A549 (cell line): ENCODE measurements at regions of chr1 and their contacts with region 1.

Region 1: GRCh38 chr1:234610348-234611152 is 572 bp upstream of the IRF2BP2 start:
- DNase-seq: peak; percentile 92 to 95
- ATAC-seq: peak; percentile 42 to 58
- H3K4me3 ChIP-seq: peak overlapping the region; percentile 64
- H3K27ac ChIP-seq: peak overlapping the region; percentile 96
- H3K4me1 ChIP-seq: peaks cover 38% of the 10 kb centered on the region
- CTCF ChIP-seq: no peak; the same call in 2 of the 3 replicates
- EP300 ChIP-seq: no peak; a peak in 1 of 5 replicates
- POLR2A ChIP-seq: peak; percentile 97
- RAD21 ChIP-seq: peak in 1 of 2 experiments; percentile 2; a peak in 1 of 5 replicates

Region 2: DNA sequence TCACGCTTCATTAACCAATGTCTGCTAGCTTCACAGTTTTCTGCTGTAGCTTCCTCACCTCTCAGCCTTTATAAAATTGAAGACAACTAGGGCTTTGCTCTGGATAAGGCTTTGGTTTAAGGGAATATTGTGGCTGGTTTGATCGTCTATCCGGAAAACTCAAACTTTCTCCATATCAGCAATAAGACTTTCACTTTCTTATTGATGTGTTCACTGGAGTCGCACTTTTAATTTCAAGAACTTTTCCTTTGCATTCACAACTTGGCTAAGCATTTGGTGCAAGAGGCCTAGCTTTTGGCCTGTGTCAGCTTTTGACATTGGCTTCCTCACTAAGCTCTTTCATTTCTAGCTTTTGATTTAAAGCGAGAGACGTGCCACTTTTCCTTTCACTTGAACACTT is 224.4 kb before region 1 on chr1:
- CTCF ChIA-PET with region 1: no interaction called
- POLR2A ChIA-PET with region 1: no interaction called
- DNase-seq: no peak
- ATAC-seq: no peak
- H3K4me3 ChIP-seq: no peak overlapping the region
- H3K27ac ChIP-seq: no peak overlapping the region
- H3K4me1 ChIP-seq: no peaks in the 10 kb centered on the region
- CTCF ChIP-seq: no peak
- EP300 ChIP-seq: no peak
- POLR2A ChIP-seq: no peak
- RAD21 ChIP-seq: no peak

Region 3: DNA sequence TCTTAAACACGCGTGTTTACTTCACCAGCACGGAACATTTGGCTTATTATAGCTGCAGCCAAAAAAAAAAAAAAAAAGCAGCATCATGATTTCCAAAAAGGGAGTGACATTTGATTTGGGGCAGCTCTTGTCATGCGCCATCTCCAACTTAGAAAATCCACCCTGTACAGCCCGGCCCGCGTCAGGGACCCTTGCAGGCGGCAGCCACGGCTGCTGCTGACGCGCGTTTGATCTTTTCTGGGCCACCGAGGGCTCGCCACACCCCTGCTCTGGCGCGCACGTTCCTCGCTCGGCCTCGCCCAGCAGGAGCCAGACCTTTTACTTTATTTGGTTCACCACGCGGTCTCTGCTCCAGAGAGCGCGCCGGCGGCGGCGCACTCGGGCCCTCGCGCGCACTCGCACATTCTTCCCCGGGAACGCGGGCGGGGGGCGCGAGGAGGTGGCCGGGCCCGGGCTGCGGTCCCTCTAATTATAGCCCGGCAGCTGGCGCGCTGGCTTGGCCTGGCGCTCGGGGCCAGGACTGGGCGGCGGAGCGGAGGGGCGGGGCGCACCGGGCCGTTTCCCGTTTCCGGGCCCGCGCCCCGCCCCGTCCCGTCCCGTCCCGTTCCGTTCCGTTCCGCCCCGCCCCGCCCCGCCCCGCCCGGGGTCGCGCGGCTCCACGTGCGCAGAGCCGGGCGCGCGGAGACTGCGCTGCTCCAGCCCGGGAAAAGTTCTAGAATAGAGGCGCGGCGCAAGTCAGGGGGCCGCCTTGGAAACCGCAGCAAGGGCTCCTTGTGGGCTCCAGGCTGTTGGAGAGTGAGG is 10.7 kb before region 1 on chr1:
- CTCF ChIA-PET with region 1: interaction called, 8 read pairs
- POLR2A ChIA-PET with region 1: interaction called, 50 read pairs
- DNase-seq: peak; percentile 65 to 87
- ATAC-seq: peak; percentile 77 to 88
- H3K4me3 ChIP-seq: peak overlapping the region; percentile 49
- H3K27ac ChIP-seq: peak overlapping the region; percentile 94 to 96
- H3K4me1 ChIP-seq: peaks cover 58% of the 10 kb centered on the region
- CTCF ChIP-seq: 0 out of 3 replicates have a peak, but pooled peaks have one; percentile 5
- EP300 ChIP-seq: no peak; a peak in 1 of 5 replicates
- POLR2A ChIP-seq: peak; percentile 34
- RAD21 ChIP-seq: peak in 1 of 2 experiments; percentile 53; a peak in 3 of 5 replicates

Region 4: DNA sequence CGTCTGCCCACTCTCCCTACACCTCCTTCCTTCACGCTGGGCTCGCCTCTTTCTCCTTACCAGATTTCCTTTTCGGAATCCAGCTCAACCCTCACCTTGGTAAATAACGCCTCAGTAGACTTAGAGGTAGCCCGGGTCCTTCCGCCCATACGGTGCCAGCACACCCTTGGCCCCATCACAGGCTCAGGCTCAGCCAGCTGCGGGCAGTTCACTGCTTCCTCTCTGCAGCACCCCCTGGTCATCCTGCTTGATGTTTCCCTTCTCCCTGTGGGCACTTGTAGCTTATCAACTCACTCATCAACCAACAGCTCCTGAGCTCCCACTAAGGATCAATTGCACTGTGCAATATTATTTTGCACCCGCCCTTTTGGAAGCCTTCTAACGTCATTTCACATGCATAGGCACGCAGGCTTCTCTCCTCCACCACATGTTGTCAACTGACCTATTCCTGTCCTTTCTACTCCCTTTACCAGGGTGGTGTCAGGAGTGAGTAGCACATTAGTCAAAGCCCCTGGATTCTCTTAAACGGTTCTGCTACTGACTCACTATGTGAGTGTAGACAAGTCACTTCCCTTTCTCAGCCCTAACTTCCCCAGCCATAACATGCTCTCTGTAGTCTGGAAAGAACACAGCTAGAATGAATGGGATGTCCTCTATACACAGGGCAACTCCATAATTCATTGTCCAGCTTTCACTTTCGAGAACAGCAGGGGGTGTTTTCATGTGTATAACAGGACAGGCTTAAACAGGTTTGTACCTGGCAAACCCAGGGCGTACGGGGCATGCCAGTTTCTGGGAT is 46.5 kb after region 1 on chr1:
- CTCF ChIA-PET with region 1: interaction called, 4 read pairs
- POLR2A ChIA-PET with region 1: interaction called, 35 read pairs
- DNase-seq: peak; percentile 83 to 85
- ATAC-seq: peak; percentile 80 to 86
- H3K4me3 ChIP-seq: no peak overlapping the region
- H3K27ac ChIP-seq: peak overlapping the region; percentile 81 to 88
- H3K4me1 ChIP-seq: peaks cover 50% of the 10 kb centered on the region
- CTCF ChIP-seq: no peak
- EP300 ChIP-seq: peak in 1 of 2 experiments; percentile 15; a peak in 1 of 5 replicates
- POLR2A ChIP-seq: no peak
- RAD21 ChIP-seq: peak; percentile 16 to 19; a peak in 2 of 5 replicates

Region 5: DNA sequence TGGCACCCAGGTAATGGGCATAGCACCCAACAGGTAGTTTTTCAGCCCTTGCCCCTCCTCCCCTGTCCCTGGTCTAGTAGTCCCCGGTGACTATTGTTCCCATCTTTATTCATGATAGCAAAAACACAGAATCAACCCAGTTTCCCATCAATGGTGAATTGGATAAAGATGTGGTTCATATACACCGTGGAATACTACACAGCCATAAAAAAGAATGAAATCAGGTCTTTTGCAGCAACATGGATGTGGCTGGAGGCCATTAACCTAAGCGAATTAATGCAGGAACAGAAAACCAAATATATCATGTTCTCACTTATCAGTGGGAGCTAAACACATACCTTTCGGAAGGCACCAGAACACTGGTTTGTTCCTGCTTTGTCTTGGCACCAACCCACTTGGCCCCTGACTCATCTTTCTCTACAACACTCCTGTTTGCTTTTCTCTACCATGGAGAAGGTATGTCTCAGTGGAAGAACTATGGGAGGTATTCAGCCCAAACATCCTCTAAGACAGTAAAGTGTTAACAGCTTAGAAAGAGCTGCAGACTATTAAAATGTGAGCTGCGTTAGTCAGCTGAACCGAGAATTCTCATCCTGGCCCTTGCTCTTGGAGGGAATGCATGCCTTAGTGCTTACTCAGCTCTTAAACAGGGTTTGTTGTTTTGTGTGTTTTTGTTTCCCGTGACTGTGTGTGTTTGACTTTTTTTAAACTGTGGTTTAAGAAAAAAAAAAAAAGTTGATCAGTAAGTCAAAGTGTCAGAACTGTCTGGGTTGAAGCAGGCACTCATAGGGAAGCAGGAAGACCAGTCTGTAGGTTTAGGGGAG is 315.1 kb after region 1 on chr1:
- CTCF ChIA-PET with region 1: interaction called, 3 read pairs
- POLR2A ChIA-PET with region 1: interaction called, 30 read pairs
- DNase-seq: peak; percentile 84 to 95
- ATAC-seq: peak; percentile 96 to 97
- H3K4me3 ChIP-seq: no peak overlapping the region
- H3K27ac ChIP-seq: peak overlapping the region; percentile 72 to 84
- H3K4me1 ChIP-seq: peaks cover 25% of the 10 kb centered on the region
- CTCF ChIP-seq: no peak
- EP300 ChIP-seq: peak; percentile 71 to 79; a peak in 3 of 5 replicates
- POLR2A ChIP-seq: no peak
- RAD21 ChIP-seq: peak; percentile 43 to 70; a peak in 4 of 5 replicates

Region 6: GRCh38 chr1:234978397-234979295 is 368.1 kb after region 1 on chr1:
- CTCF ChIA-PET with region 1: interaction called, 4 read pairs
- POLR2A ChIA-PET with region 1: interaction called, 33 read pairs
- DNase-seq: peak in 1 of 2 experiments; percentile 91
- ATAC-seq: peak; percentile 7 to 40
- H3K4me3 ChIP-seq: no peak overlapping the region
- H3K27ac ChIP-seq: peak overlapping the region; percentile 94 to 95
- H3K4me1 ChIP-seq: peaks cover 85% of the 10 kb centered on the region
- CTCF ChIP-seq: no peak
- EP300 ChIP-seq: peak; percentile 94 to 96
- POLR2A ChIP-seq: no peak
- RAD21 ChIP-seq: peak; percentile 15 to 67; a peak in 4 of 5 replicates

Region 7: GRCh38 chr1:235075188-235075926 is 464.8 kb after region 1 on chr1:
- CTCF ChIA-PET with region 1: interaction called, 4 read pairs
- POLR2A ChIA-PET with region 1: interaction called, 50 read pairs
- DNase-seq: peak; percentile 74 to 90
- ATAC-seq: peak; percentile 55 to 73
- H3K4me3 ChIP-seq: 0 out of 3 replicates have a peak overlapping the region, but pooled peaks have one; percentile 14
- H3K27ac ChIP-seq: peak overlapping the region; percentile 97 to 98
- H3K4me1 ChIP-seq: peaks cover 92% of the 10 kb centered on the region
- CTCF ChIP-seq: no peak
- EP300 ChIP-seq: peak; percentile 63 to 76; a peak in 4 of 5 replicates
- POLR2A ChIP-seq: no peak
- RAD21 ChIP-seq: peak; percentile 8 to 12; a peak in 1 of 5 replicates